ENCODE measurements at regions of chr4 and their contacts with region 1.

Region 1: GRCh38 chr4:94127707-94128328 is 79.8 kb upstream of the SMARCAD1 start:
- DNase-seq: no peak
- H3K4me3 ChIP-seq: no peak overlapping the region
- H3K27ac ChIP-seq: no peak overlapping the region
- H3K4me1 ChIP-seq: no peaks in the 10 kb centered on the region
- H3K27me3 ChIP-seq: peaks cover 12% of the 10 kb centered on the region
- CTCF ChIP-seq: peak; percentile 65

Region 2: DNA sequence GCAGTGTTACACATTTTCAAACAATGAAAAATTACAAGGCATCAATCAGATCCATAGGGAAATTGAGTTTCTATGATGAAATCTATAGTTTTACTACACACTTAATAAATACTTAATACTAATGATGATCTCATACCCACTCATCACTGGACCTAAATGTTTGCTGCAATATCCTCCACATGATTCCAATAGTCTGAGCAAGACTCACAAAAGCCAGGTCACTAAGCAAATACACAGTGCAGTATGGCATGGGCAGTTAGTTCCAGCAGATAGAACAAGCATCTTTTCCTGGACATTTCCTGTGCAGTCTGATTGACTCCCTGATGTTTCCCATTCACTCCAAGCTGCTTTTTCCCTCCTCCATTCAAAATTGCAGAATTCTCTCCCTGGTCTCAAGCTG is 408.3 kb before region 1 on chr4:
- intact Hi-C with region 1: no loop called
- DNase-seq: no peak
- H3K4me3 ChIP-seq: no peak overlapping the region
- H3K27ac ChIP-seq: no peak overlapping the region
- H3K4me1 ChIP-seq: no peaks in the 10 kb centered on the region
- H3K27me3 ChIP-seq: no peaks in the 10 kb centered on the region
- CTCF ChIP-seq: no peak

Region 3: GRCh38 chr4:93791570-93792195 is 336.1 kb before region 1 on chr4:
- intact Hi-C with region 1: loop called (anchors 5 kb)
- DNase-seq: no peak
- H3K4me3 ChIP-seq: no peak overlapping the region
- H3K27ac ChIP-seq: no peak overlapping the region
- H3K4me1 ChIP-seq: no peaks in the 10 kb centered on the region
- H3K27me3 ChIP-seq: no peaks in the 10 kb centered on the region
- CTCF ChIP-seq: peak; percentile 82